ENCODE measurements at regions of chr4 and their contacts with region 1.

Region 1: DNA sequence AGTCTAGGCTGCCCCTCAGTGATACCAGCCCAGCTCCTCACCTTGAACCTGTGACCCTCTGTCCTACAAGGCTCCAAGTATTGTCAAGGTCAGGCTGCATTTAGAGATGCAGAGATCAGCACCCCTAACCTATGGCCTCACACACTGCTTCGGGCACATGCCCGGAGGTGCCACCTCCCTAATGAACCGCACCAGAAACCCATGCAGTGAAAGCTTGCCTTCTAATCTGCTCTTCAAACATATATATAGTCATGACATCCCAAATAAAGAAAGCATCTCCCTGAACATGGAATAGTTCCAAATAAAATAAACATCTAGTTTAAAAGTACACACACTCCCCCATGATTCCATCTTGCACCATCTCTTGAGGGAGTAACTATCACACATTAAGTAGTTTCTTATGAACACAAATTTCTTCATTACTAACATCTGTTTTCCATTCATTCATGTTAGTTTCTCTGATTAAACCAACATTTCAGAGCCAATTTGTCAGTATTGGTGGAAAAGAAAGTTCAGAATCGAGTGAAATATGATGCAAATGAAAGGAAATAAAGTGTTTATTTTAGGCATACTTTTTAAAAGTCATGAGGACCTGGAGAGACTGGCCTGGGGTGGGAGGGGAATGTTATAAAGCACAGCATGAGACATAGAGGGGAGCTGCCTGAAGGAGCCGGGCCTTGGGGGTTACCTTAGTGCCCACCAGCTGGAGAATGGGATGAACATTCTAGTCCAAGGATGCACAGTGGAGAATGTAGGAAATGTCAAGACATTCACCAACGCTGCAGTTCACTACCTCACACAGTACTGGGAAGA is 19.2 kb downstream of the CC2D2A start:
- DNase-seq: no peak
- ATAC-seq: peak in 1 of 2 donors; percentile 65
- H3K4me3 ChIP-seq: no peak overlapping the region
- H3K27ac ChIP-seq: peak overlapping the region in 3 of 4 donors; percentile 23 to 58 (median 47)
- H3K4me1 ChIP-seq: no peaks in the 10 kb centered on the region
- H3K27me3 ChIP-seq: no peaks in the 10 kb centered on the region
- CTCF ChIP-seq: no peak
- POLR2A ChIP-seq: no peak

Region 2: DNA sequence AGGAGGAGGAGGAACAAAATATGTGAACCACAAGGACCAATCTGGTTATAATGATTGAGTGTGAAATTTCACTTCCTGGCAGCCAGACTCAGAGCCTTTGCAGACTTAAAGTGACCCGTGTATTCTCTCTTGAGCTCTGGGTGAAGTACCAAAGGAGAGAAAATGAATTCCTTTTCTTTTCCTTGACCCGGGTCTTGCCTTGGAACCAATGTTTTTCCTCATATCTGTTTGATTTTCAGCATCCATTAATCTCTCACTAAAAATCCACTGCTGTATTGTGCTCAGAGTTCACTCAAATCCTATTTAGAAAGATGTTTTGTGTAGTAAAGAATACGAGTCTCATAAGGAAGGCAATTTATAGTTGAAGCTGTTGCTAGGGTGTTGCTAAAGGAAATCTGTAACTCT is 139.3 kb before region 1 on chr4:
- in situ Hi-C with region 1: no loop called
- intact Hi-C with region 1: no loop called
- DNase-seq: no peak
- ATAC-seq: no peak
- H3K4me3 ChIP-seq: no peak overlapping the region
- H3K27ac ChIP-seq: no peak overlapping the region
- H3K4me1 ChIP-seq: no peaks in the 10 kb centered on the region
- H3K27me3 ChIP-seq: no peaks in the 10 kb centered on the region
- CTCF ChIP-seq: no peak
- POLR2A ChIP-seq: no peak

Region 3: DNA sequence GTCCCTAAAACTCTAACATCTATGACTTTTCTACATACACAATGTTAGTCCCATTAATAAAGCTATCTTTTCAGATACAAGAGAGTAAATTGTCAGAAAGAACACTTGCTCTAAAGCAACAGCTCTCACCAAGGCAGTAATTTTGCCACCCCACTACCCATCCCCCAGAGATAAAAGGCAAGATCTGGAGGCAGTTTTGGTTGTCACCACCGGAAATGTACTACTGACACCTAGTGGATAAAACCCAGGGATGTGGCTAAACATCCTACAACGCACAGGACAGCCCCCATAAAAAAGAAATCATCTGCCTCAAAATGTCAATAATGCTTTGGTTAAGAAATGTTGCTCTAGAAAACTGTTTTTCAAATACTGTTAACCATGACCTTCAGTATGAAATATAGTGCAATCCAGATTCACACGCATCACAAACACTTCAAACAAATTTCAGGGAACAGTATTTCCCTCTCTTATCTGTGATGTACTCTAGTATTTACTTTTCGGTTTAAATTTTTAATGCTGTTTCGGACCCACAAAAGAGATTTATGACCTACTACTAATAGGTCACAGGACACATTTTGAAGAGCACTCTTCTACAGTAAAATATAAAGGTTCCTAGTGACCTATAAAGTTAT is 161.2 kb after region 1 on chr4:
- in situ Hi-C with region 1: loop called in 2 of 4 experiments (anchors 10 to 25 kb)
- intact Hi-C with region 1: no loop called
- DNase-seq: peak; percentile 18 to 55
- ATAC-seq: peak; percentile 76 to 84
- H3K4me3 ChIP-seq: peak overlapping the region in 1 of 4 donors; percentile 2
- H3K27ac ChIP-seq: peak overlapping the region; percentile 11 to 99 (median 30)
- H3K4me1 ChIP-seq: peaks cover 64 to 68% of the 10 kb centered on the region in 2 donors
- H3K27me3 ChIP-seq: no peaks in the 10 kb centered on the region
- CTCF ChIP-seq: peak; percentile 44 to 78 (median 74)
- POLR2A ChIP-seq: no peak